K562 (cell line): ENCODE measurements at regions of chr6 and their contacts with region 1.

Region 1: GRCh38 chr6:31574106-31575061 is 981 bp upstream of the TNF start:
- DNase-seq: no peak
- ATAC-seq: peak; percentile 56
- H3K4me3 ChIP-seq: no peak overlapping the region
- H3K27ac ChIP-seq: no peak overlapping the region
- H3K4me1 ChIP-seq: peaks cover 0 to 20% of the 10 kb centered on the region in 2 experiments; a peak in 2 of 5 replicates
- H3K27me3 ChIP-seq: no peaks in the 10 kb centered on the region
- CTCF ChIP-seq: peak in 2 of 3 experiments; percentile 23 to 39; a peak in 2 of 6 replicates
- EP300 ChIP-seq: no peak
- POLR2A ChIP-seq: no peak
- RAD21 ChIP-seq: peak in 1 of 2 experiments; percentile 22; a peak in 1 of 4 replicates

Region 2: DNA sequence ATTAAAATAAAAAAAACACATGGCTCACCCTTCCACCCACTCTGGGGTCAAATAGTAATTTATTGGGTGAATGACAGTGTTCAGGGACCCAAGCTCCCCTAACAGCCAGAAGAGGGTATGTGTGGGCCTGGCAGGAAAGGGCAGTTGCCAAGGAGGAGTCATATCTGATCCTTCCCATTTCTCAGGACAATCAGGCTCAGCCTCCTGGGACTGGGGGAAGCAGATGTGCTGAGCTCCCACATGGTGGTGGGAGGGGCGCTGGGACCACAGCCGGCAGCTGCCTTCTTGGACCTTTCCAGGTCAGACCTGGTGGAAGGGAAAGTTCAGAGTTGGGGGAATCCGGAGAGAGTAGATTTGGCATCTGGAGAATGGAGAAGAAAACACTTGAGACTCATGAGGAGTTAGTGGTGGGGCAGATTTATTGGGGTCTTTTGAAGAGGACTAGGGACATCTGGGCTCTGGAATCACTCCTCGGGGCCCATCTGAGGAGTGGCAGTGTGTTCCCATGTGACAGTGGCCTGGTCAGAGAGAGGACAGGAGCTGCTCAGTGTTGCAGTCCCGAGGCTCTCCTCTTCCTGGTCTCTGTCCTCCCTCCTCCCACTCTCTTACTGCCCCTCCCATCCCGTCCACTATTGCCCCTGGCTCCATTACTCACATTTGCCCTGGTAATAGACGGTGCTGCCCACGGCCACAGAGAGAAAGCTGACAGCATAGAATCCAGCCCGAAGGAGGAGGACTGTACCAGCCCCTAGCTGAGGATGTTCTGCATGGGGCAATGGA is 14.7 kb after region 1 on chr6:
- CTCF ChIA-PET with region 1: no interaction called
- POLR2A ChIA-PET with region 1: interaction called, 10 read pairs
- in situ Hi-C with region 1: no loop called
- intact Hi-C with region 1: no loop called
- DNase-seq: no peak
- ATAC-seq: peak; percentile 60
- H3K4me3 ChIP-seq: no peak overlapping the region
- H3K27ac ChIP-seq: no peak overlapping the region
- H3K4me1 ChIP-seq: peaks cover 28 to 46% of the 10 kb centered on the region in 2 experiments
- H3K27me3 ChIP-seq: no peaks in the 10 kb centered on the region
- CTCF ChIP-seq: no peak
- EP300 ChIP-seq: no peak
- POLR2A ChIP-seq: no peak
- RAD21 ChIP-seq: no peak